ENCODE measurements at regions of chr16 and their contacts with region 1.

Region 1: GRCh38 chr16:28264656-28265055 is 27.7 kb upstream of the SBK1 start:
- DNase-seq: peak; percentile 68
- H3K4me3 Mint-ChIP-seq: no peak overlapping the region
- H3K27ac Mint-ChIP-seq: no peak overlapping the region
- H3K4me1 Mint-ChIP-seq: peaks cover 8% of the 10 kb centered on the region
- H3K27me3 Mint-ChIP-seq: peaks cover 64% of the 10 kb centered on the region
- CTCF ChIP-seq: no peak

Region 2: DNA sequence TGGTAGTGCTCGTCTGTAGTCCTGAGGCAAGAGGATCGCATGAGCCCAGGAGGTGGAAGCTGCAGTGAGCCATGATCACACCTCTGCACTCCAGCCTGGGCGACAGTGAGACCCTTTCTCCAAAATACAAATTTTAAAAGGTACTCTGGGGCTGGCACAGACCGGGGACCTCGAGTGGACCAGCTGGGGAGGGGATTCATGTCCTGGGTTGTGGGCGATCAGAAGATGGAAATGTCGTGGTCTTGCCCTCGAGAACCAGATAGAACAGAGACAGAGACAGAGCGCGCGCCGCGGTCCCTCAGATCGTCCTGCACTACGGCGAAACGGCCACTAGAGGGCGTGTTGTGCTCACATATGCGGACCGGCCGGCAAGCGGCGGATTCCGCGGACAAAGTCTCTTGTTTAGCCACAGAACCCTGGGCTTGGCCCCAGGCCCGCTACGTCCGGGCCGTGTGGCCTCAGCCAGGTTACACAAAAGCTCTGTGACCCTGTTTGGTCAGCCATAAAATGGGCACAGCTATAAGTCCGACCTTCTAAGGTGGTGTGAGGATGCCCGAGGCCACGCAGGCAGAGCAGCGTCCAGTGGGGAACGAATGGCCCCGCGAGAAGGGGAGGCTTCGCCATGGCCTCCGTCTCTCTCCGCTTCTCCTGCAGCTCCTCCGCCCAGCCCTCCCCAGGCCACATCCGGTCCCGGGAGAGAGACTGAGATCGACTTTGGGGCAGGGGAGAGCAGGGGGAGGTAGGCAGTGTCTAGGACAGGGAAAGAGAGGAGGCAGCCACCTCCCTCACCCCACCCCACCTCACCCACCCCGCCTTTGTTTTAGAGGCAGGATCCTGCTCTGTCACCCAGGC is 13.1 kb after region 1 on chr16:
- CTCF ChIA-PET with region 1: interaction called, 20 read pairs
- POLR2A ChIA-PET with region 1: no interaction called
- intact Hi-C with region 1: no loop called
- DNase-seq: peak; percentile 75
- H3K4me3 Mint-ChIP-seq: peak overlapping the region; percentile 60
- H3K27ac Mint-ChIP-seq: no peak overlapping the region
- H3K4me1 Mint-ChIP-seq: peaks cover 9% of the 10 kb centered on the region
- H3K27me3 Mint-ChIP-seq: peaks cover 46% of the 10 kb centered on the region
- CTCF ChIP-seq: peak; percentile 92

Region 3: GRCh38 chr16:28297784-28298510 is 33.3 kb after region 1 on chr16:
- CTCF ChIA-PET with region 1: no interaction called
- POLR2A ChIA-PET with region 1: no interaction called
- intact Hi-C with region 1: no loop called
- DNase-seq: no peak
- H3K4me3 Mint-ChIP-seq: no peak overlapping the region
- H3K27ac Mint-ChIP-seq: no peak overlapping the region
- H3K4me1 Mint-ChIP-seq: no peaks in the 10 kb centered on the region
- H3K27me3 Mint-ChIP-seq: peaks cover 27% of the 10 kb centered on the region
- CTCF ChIP-seq: no peak

Measured in MCF 10A (cell line).